ENCODE measurements at regions of chr17 and their contacts with region 1.

Region 1: GRCh38 chr17:80899402-80900268 is 92.0 kb upstream of the CHMP6 start:
- DNase-seq: peak; percentile 29 to 88
- H3K4me3 ChIP-seq: no peak overlapping the region
- H3K27ac ChIP-seq: no peak overlapping the region
- H3K4me1 ChIP-seq: 0 out of 7 replicates have a peak, but pooled peaks cover 0 to 2% (median 0%) of the 10 kb centered on the region in 4 experiments
- H3K27me3 ChIP-seq: no peaks in the 10 kb centered on the region
- CTCF ChIP-seq: peak; percentile 86 to 91 (median 91)
- EP300 ChIP-seq: no peak
- POLR2A ChIP-seq: no peak
- RAD21 ChIP-seq: peak; percentile 93

Region 2: GRCh38 chr17:80755650-80756405 is 143.8 kb before region 1 on chr17:
- CTCF ChIA-PET with region 1: interaction called, 16 read pairs
- POLR2A ChIA-PET with region 1: no interaction called
- DNase-seq: no peak
- H3K4me3 ChIP-seq: no peak overlapping the region
- H3K27ac ChIP-seq: no peak overlapping the region
- H3K4me1 ChIP-seq: peaks cover 8 to 14% (median 12%) of the 10 kb centered on the region in 4 experiments
- H3K27me3 ChIP-seq: no peaks in the 10 kb centered on the region
- CTCF ChIP-seq: peak; percentile 34 to 53 (median 50)
- EP300 ChIP-seq: no peak
- POLR2A ChIP-seq: no peak
- RAD21 ChIP-seq: peak; percentile 26 to 50; a peak in 3 of 4 replicates

Region 3: DNA sequence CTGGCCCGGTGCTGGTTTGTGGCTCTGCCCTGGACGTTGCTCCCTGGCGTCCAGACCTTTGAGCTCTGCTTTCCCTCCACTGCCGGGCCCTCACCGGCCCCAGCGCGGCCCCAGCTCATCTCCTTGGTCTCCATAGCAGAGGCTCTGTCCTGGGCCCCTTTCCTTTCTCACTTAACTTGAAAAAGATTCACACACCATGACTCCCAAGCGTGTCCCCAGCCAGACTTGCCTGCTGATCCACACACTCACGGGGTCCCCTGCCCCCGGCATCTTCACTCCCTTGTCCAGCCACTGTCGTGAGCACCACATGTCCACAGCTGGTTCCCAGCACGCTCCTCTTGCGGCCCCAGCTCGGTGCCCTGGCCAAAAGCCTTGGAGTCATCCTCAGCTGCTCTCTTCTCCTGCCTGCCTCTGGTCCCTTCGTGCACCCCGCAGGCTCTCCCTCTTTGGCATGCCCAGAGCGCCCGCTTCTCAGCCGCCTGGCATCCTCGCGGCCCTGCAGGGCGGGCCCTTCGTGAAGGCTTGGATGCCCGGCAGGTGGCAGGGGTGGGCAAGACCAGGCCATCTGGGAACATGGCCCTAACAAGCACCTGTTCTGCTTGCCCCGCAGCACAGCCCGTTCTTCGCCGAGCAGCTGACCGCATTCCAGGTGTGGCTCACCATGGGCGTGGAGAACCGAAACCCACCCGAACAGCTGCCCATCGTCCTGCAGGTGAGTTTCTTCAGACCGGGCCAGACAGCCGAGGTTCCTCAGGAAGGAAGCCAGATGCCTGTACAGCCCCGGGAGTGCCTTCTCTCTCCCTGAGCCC is 53.6 kb before region 1 on chr17:
- CTCF ChIA-PET with region 1: interaction called, 14 read pairs
- POLR2A ChIA-PET with region 1: no interaction called
- DNase-seq: no peak
- H3K4me3 ChIP-seq: no peak overlapping the region
- H3K27ac ChIP-seq: no peak overlapping the region; the same call in 1 of the 2 replicates
- H3K4me1 ChIP-seq: peaks cover 0 to 10% (median 5%) of the 10 kb centered on the region in 4 experiments; a peak in 6 of 7 replicates
- H3K27me3 ChIP-seq: no peaks in the 10 kb centered on the region
- CTCF ChIP-seq: no peak
- EP300 ChIP-seq: no peak
- POLR2A ChIP-seq: no peak
- RAD21 ChIP-seq: peak in 1 of 2 experiments; percentile 10; a peak in 1 of 4 replicates

Region 4: DNA sequence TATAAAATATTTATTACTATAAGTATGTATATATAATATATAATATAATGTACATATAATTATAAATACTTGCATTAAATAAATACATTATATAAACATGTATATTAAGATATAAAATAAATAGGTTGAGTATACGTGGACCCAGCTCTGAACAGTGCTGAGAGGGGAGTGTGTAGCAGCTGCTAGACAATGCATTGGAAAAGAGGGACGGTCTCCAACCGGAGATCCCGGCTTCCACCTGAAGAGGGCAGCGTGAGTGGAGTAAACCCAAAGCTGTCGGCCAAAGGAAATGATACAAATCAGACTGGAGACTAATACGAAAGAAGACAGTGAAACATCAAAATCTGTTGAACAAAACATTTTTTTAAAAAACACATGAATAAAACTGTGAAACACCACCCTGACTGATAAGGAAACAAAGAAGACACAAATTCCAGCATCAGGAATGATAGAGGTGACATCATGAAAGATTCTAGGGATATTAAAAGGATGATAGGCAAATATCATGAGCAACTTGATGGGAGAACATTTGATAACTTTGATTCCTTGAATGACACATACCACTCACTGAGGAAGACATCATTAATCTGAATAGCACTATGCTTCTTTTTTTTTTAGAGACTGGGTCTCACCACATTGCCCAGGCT is 33.4 kb before region 1 on chr17:
- CTCF ChIA-PET with region 1: interaction called, 17 read pairs
- POLR2A ChIA-PET with region 1: no interaction called
- DNase-seq: peak in 1 of 2 experiments; percentile 83
- H3K4me3 ChIP-seq: no peak overlapping the region
- H3K27ac ChIP-seq: no peak overlapping the region
- H3K4me1 ChIP-seq: peaks cover 0 to 1% (median 0%) of the 10 kb centered on the region in 4 experiments; a peak in 1 of 7 replicates
- H3K27me3 ChIP-seq: no peaks in the 10 kb centered on the region
- CTCF ChIP-seq: peak; percentile 67 to 76 (median 75)
- EP300 ChIP-seq: no peak
- POLR2A ChIP-seq: no peak
- RAD21 ChIP-seq: peak; percentile 51 to 63

Region 5: GRCh38 chr17:80879723-80880647 is 19.6 kb before region 1 on chr17:
- CTCF ChIA-PET with region 1: interaction called, 17 read pairs
- POLR2A ChIA-PET with region 1: interaction called, 3 read pairs
- DNase-seq: no peak
- H3K4me3 ChIP-seq: no peak overlapping the region
- H3K27ac ChIP-seq: no peak overlapping the region
- H3K4me1 ChIP-seq: peaks cover 0 to 17% (median 8%) of the 10 kb centered on the region in 4 experiments; a peak in 6 of 7 replicates
- H3K27me3 ChIP-seq: no peaks in the 10 kb centered on the region
- CTCF ChIP-seq: no peak
- EP300 ChIP-seq: no peak
- POLR2A ChIP-seq: no peak
- RAD21 ChIP-seq: no peak

Region 6: DNA sequence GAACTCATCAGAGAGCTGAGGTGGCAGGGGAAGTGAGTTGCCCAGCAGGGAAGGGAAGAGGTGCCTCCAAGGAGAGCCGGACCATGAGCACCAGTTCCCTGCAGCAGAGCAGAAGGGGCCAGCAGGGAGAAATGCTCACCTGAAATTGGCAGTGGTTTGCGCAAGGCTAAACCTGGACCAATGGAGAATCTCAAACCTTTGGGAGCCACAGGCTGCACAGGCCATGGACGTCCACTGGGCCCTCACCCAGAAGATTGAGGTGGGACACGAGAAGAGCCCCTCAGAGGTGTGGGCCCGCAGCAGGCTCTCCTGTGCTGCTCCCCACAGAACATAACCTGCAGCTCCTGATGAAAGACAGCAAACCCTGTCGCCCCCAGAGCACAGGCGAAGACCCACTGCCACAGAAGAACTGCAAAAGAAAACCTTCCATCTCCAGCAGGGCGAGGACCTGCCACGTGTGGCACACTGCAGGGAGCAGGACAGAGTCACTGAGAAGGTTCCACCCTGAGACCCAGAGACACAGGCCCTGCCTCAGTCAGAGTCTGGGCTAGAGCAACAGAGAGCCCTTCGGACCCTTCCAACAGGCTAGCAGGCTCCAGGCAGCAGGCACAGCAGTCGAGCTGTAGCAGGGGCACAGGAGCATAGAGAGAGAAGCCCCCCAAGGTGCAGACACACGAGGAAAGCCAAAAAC is 31.8 kb after region 1 on chr17:
- CTCF ChIA-PET with region 1: interaction called, 16 read pairs
- POLR2A ChIA-PET with region 1: no interaction called
- DNase-seq: no peak
- H3K4me3 ChIP-seq: no peak overlapping the region
- H3K27ac ChIP-seq: no peak overlapping the region
- H3K4me1 ChIP-seq: peaks cover 0 to 11% (median 4%) of the 10 kb centered on the region in 4 experiments; a peak in 4 of 7 replicates
- H3K27me3 ChIP-seq: peaks cover 0 to 25% (median 24%) of the 10 kb centered on the region in 4 experiments; a peak in 6 of 7 replicates
- CTCF ChIP-seq: no peak
- EP300 ChIP-seq: no peak
- POLR2A ChIP-seq: no peak
- RAD21 ChIP-seq: no peak

Region 7: DNA sequence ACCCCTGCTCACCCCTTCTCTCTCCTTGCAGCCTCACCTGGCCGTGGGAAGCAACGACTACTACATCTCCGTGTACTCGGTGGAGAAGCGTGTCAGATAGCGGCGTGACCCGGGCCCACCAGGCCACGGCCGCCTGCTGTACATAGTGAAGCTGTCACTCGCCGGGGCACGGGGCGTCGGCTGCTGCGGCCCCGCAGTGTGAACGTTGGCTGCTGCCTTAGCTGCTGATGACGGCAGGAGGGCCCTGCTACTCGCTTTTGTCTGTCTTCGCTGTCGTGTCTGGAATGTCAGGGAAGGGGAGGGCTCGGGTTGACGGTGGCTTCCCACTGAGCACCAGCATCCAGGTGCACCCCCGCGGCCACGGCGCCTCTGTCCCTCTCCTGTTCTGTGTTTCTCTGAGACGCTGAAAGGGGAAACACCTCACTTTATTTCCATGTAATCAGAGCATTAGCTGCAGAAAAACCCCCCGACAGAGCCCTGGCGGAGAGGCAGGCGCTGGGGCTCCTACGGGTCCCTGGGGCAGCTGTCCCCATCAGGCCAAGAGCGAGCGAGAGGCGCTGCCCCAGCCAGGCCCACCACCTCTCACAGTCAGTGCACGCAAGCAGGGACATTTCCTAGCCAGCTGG is 64.7 kb after region 1 on chr17:
- CTCF ChIA-PET with region 1: no interaction called
- POLR2A ChIA-PET with region 1: no interaction called
- DNase-seq: no peak
- H3K4me3 ChIP-seq: no peak overlapping the region
- H3K27ac ChIP-seq: no peak overlapping the region
- H3K4me1 ChIP-seq: peaks cover 0 to 3% (median 0%) of the 10 kb centered on the region in 4 experiments; a peak in 2 of 7 replicates
- H3K27me3 ChIP-seq: no peaks in the 10 kb centered on the region
- CTCF ChIP-seq: no peak
- EP300 ChIP-seq: no peak
- POLR2A ChIP-seq: no peak
- RAD21 ChIP-seq: no peak